ENCODE measurements at regions of chr3 and their contacts with region 1.

Region 1: GRCh38 chr3:154252759-154253638 is 71.3 kb downstream of the DHX36 start:
- DNase-seq: peak; percentile 76 to 90 (median 80)
- ATAC-seq: peak; percentile 99
- H3K4me3 ChIP-seq: no peak overlapping the region
- H3K27ac ChIP-seq: no peak overlapping the region
- H3K4me1 ChIP-seq: no peaks in the 10 kb centered on the region
- H3K27me3 ChIP-seq: no peaks in the 10 kb centered on the region
- CTCF ChIP-seq: peak; percentile 91 to 97 (median 97)
- EP300 ChIP-seq: no peak
- POLR2A ChIP-seq: no peak
- RAD21 ChIP-seq: peak; percentile 76 to 86

Region 2: DNA sequence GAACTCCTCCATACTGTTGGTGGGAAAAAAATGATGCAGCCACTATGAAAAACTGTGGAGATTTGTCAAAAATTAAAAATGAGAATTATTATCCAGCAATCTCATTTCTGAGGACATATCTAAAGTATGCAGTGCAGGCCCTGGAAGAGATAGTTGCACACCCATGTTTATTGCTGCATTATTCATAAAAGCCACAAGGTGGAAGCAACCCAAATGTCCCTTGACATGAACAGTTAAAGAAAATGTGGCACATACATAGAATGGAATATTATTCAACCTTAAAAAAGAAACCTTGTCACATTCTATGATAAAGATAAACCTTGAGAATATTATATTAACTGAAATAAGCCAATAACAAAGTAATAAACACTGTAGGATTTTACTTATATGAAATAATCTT is 212.7 kb before region 1 on chr3:
- CTCF ChIA-PET with region 1: interaction called, 9 read pairs
- POLR2A ChIA-PET with region 1: no interaction called
- in situ Hi-C with region 1: no loop called
- intact Hi-C with region 1: loop called (anchors 2 kb)
- DNase-seq: peak in 1 of 4 experiments; percentile 22
- ATAC-seq: peak; percentile 71; the same call in 2 of the 3 replicates
- H3K4me3 ChIP-seq: no peak overlapping the region
- H3K27ac ChIP-seq: no peak overlapping the region
- H3K4me1 ChIP-seq: no peaks in the 10 kb centered on the region
- H3K27me3 ChIP-seq: no peaks in the 10 kb centered on the region
- CTCF ChIP-seq: peak in 2 of 3 experiments; percentile 35 to 36; a peak in 3 of 6 replicates
- EP300 ChIP-seq: no peak
- POLR2A ChIP-seq: no peak
- RAD21 ChIP-seq: peak; percentile 22 to 41; a peak in 3 of 4 replicates

Region 3: DNA sequence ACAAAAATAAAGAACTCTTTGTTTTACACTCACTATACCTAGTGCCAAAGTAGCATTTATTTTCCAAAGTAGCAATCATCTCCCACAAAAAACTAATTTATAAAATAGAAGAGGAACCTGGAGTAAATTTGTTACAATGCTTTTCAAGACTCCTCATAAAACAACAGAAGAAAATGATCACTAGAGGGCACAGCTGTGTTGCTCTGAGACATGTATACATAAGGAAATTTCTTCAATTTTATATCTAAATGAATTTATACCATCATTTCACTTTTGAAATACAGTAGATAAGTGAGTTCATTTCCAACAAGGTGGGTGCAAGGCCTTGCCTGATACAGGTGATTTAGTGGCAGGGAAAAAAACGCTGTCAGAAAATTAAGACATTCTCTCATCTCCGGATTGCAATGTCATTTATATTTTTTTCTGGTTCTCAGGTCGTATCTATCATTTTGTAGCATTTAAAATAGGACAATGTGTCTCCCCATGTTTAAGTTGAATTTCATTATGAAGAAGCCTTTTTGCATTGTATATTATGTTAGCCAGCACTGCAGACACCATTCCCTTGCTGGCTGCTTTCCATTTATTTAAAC is 157.1 kb before region 1 on chr3:
- CTCF ChIA-PET with region 1: interaction called, 5 read pairs
- POLR2A ChIA-PET with region 1: no interaction called
- in situ Hi-C with region 1: no loop called
- intact Hi-C with region 1: loop called (anchors 1 kb)
- DNase-seq: peak in 1 of 4 experiments; percentile 13
- ATAC-seq: no peak
- H3K4me3 ChIP-seq: no peak overlapping the region
- H3K27ac ChIP-seq: no peak overlapping the region
- H3K4me1 ChIP-seq: no peaks in the 10 kb centered on the region
- H3K27me3 ChIP-seq: no peaks in the 10 kb centered on the region
- CTCF ChIP-seq: peak in 2 of 3 experiments; percentile 2 to 45; a peak in 3 of 6 replicates
- EP300 ChIP-seq: no peak
- POLR2A ChIP-seq: no peak
- RAD21 ChIP-seq: peak in 1 of 2 experiments; percentile 45; a peak in 3 of 4 replicates

Region 4: DNA sequence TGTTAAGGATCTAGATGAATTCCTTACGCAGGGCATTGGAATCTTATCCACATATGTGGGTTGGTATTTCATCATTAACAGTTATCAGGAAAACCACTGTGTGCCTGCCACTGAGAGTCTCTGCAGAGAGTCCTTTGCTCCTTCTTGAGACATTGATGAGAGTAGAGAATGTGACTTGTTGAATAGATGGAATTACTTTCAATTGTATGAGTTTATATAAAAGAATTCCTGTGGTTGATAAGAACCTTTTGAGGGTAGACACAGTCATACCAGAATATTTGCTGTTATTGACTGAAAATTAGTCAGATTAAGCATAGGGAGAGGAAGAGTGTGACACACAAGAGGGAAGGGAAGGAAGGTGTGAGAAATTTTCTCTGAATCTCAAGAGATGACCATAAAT is 101.0 kb before region 1 on chr3:
- CTCF ChIA-PET with region 1: no interaction called
- POLR2A ChIA-PET with region 1: no interaction called
- in situ Hi-C with region 1: no loop called
- intact Hi-C with region 1: no loop called
- DNase-seq: no peak
- ATAC-seq: no peak
- H3K4me3 ChIP-seq: no peak overlapping the region
- H3K27ac ChIP-seq: no peak overlapping the region
- H3K4me1 ChIP-seq: no peaks in the 10 kb centered on the region
- H3K27me3 ChIP-seq: no peaks in the 10 kb centered on the region
- CTCF ChIP-seq: no peak
- EP300 ChIP-seq: no peak
- POLR2A ChIP-seq: no peak
- RAD21 ChIP-seq: no peak

Region 5: DNA sequence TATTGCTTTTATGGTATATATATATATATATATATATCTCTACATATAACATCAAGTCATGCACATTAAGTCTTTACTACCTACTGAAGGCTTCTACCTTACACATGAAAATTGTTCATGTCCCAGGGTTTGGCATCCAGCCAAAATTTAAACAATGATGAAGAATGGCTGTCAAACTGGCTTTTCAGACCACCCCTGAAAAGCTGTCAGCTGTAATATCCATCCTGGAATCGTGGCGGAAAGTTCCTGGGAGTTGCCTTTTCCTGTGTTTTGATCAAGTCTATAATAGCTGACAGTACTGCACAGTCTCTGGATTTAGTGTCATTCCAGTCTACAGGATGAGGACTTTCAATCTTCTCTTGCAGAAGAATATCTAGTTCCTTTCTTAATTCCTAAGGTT is 23.0 kb after region 1 on chr3:
- CTCF ChIA-PET with region 1: no interaction called
- POLR2A ChIA-PET with region 1: no interaction called
- in situ Hi-C with region 1: no loop called
- intact Hi-C with region 1: no loop called
- DNase-seq: peak in 1 of 4 experiments; percentile 6
- ATAC-seq: no peak
- H3K4me3 ChIP-seq: no peak overlapping the region
- H3K27ac ChIP-seq: no peak overlapping the region
- H3K4me1 ChIP-seq: no peaks in the 10 kb centered on the region
- H3K27me3 ChIP-seq: no peaks in the 10 kb centered on the region
- CTCF ChIP-seq: no peak
- EP300 ChIP-seq: no peak
- POLR2A ChIP-seq: no peak
- RAD21 ChIP-seq: no peak